Heart right ventricle (tissue), 16 donors: ENCODE measurements at regions of chr9 and their contacts with region 1.

Region 1: DNA sequence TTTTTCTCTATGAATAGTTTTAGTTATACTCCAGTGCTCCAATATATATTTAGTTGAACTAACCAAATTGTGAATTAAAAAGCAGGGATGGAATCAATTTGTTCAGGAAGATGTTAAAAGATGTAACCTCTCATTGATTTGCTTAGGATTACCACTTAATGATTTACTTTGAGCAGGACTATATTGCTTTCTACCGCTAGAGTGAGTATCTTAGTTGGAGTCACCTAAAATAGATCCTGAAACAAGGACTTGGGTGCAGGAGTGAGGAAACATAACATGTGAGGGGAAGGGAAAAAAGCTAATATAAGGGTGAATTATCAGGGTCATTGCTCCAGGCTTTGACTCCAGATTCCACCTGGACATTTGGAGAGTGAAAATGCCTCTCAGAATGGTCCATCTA is 2277.4 kb upstream of the C9orf72 start:
- DNase-seq: no peak
- ATAC-seq: no peak
- H3K4me3 ChIP-seq: no peak overlapping the region
- H3K27ac ChIP-seq: no peak overlapping the region
- H3K4me1 ChIP-seq: no peaks in the 10 kb centered on the region
- H3K27me3 ChIP-seq: no peaks in the 10 kb centered on the region
- CTCF ChIP-seq: no peak

Region 2: DNA sequence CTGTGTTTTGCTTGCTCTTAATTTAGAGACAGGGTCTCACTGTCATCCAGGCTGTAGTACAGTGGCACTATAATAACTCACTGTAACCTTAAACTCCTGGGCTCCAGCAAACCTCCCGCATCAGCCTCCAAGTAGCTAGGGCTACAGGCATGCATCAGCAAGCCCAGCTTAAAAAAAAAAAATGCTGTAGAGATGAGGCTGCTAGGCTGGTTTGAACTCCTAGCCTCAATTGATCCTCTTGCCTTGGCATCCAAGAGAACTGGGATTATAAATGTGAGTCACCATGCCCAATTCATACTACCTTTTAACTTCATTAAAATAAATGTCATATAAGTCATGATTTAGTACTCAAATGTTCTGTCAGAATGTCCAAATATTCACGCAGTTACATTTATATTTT is 81.6 kb before region 1 on chr9:
- intact Hi-C with region 1: no loop called
- DNase-seq: no peak
- ATAC-seq: no peak
- H3K4me3 ChIP-seq: no peak overlapping the region
- H3K27ac ChIP-seq: no peak overlapping the region
- H3K4me1 ChIP-seq: no peaks in the 10 kb centered on the region
- H3K27me3 ChIP-seq: no peaks in the 10 kb centered on the region
- CTCF ChIP-seq: no peak

Region 3: GRCh38 chr9:29806937-29807618 is 43.6 kb before region 1 on chr9:
- intact Hi-C with region 1: loop called in 1 of 10 experiments (anchors 10 kb)
- DNase-seq: no peak
- ATAC-seq: no peak
- H3K4me3 ChIP-seq: no peak overlapping the region
- H3K27ac ChIP-seq: no peak overlapping the region
- H3K4me1 ChIP-seq: no peaks in the 10 kb centered on the region
- H3K27me3 ChIP-seq: no peaks in the 10 kb centered on the region
- CTCF ChIP-seq: no peak

Region 4: GRCh38 chr9:29906065-29906464 is 55.4 kb after region 1 on chr9:
- intact Hi-C with region 1: loop called in 1 of 10 experiments (anchors 10 kb)
- DNase-seq: no peak
- ATAC-seq: no peak
- H3K4me3 ChIP-seq: no peak overlapping the region
- H3K27ac ChIP-seq: no peak overlapping the region
- H3K4me1 ChIP-seq: no peaks in the 10 kb centered on the region
- H3K27me3 ChIP-seq: no peaks in the 10 kb centered on the region
- CTCF ChIP-seq: no peak

Region 5: DNA sequence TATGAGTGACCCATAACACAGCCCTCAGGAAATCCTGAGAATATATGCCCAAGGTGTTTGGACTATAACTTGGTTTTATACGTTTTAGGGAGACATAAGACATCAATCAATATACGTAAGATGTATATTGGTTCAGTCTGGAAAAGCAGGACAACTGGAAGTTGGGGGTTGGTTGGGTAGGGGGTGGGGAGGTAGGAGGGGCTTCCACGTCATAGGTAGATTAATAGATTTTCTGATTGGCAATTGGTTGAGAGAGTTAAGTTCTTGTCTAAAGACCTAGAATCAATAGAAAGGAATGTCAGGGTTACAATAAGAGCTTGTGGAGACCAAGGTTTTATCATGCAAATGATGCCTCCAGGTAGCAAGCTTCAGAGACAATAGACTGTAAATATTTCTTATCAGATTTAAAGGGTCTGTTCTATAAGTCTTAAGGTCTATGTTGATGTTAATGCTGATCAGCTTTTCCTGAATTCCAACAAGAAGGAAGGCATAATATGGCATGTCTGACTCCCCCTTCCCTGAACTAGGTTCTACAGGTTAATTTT is 266.1 kb after region 1 on chr9:
- intact Hi-C with region 1: no loop called
- DNase-seq: no peak
- ATAC-seq: no peak
- H3K4me3 ChIP-seq: no peak overlapping the region
- H3K27ac ChIP-seq: no peak overlapping the region
- H3K4me1 ChIP-seq: no peaks in the 10 kb centered on the region
- H3K27me3 ChIP-seq: no peaks in the 10 kb centered on the region
- CTCF ChIP-seq: no peak